ENCODE measurements at regions of chr5 and their contacts with region 1.

Region 1: DNA sequence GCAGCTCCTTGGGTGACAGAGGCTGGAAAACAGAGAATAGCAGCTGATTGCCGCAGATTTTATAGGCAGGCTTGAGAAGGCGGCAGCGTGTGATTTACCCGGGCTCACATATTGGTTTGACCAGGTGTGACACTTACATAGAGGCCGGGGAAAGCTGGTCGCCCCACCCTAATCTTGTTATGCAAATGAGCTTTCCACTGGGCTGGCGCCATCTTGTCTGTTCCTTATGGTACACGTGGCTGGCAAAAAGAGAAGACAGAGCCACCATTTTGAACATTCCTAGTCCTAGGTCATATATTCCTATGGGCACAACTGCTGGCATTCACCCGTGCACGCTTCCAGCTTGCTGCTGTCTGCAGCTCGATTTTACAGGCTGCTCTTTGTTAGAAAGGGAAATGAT is 11.3 kb upstream of the SPZ1 start:
- DNase-seq: no peak
- H3K4me3 ChIP-seq: no peak overlapping the region
- H3K27ac ChIP-seq: no peak overlapping the region
- H3K4me1 ChIP-seq: no peaks in the 10 kb centered on the region
- H3K27me3 ChIP-seq: no peaks in the 10 kb centered on the region
- CTCF ChIP-seq: no peak

Region 2: DNA sequence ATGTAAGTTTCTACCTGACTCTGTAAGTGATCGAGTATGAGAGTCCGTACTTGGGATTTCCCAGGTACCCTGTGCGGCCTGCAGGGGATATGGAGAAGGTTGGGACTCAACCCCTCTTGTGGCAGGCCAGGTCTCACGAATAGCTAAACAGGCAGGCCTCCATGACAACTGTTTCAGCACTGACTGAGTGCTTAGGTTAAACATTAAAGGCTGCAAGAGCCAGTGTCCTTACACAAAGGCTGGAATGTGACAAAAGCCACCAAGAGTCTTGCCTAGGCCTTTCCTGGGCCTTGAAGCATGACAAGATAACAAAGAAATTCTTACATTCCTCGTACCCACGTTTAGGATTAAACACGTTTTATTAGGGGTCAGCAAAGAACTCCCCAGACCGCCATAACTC is 214.7 kb before region 1 on chr5:
- intact Hi-C with region 1: loop called (anchors 1 kb)
- DNase-seq: no peak
- H3K4me3 ChIP-seq: no peak overlapping the region
- H3K27ac ChIP-seq: no peak overlapping the region
- H3K4me1 ChIP-seq: no peaks in the 10 kb centered on the region
- H3K27me3 ChIP-seq: no peaks in the 10 kb centered on the region
- CTCF ChIP-seq: no peak

Region 3: GRCh38 chr5:80370390-80370789 is 61.9 kb after region 1 on chr5:
- intact Hi-C with region 1: no loop called
- DNase-seq: no peak
- H3K4me3 ChIP-seq: no peak overlapping the region
- H3K27ac ChIP-seq: no peak overlapping the region
- H3K4me1 ChIP-seq: no peaks in the 10 kb centered on the region
- H3K27me3 ChIP-seq: no peaks in the 10 kb centered on the region
- CTCF ChIP-seq: no peak

Region 4: DNA sequence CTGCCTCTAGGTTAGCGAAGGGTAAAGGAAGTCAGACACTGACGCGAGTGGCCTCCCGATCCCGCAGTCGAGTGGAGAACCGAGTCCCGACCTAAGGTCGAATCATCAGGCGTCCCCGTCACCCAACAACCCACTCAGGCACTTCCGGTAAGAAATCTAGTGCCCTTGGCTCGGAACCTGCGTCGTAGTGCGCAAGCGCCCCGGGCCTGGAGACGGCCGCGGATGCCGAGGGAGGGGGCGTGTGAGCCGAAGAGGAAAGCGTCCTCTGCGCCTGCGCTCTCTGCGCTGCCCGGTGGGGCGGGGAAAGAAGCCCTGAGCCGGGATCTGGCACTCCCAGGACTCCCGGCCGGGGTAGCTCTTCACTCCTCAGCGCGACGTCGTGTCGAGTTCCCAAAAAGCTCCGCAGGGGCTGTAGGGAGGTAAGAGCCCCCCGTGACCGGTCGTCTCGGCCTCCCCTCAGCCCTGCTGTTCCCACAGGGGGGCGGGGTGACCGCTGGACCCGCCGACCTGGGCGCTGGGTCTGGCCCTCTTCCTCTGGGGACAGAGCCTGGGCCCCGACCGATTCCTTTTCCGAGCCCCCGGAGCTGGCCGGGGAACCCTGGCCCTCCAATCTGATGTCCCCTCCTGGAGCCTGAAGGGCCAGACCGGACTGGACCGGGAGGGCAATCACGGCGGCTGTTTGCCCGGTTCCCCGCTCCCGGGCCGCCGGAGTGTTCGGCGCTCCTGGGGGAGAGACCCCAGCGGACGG is 99.4 kb after region 1 on chr5 and contains the start of gene ZFYVE16:
- intact Hi-C with region 1: no loop called
- DNase-seq: peak; percentile 91 to 99
- H3K4me3 ChIP-seq: peak within 1 kb of the TSS; percentile 71 to 78
- H3K27ac ChIP-seq: peak within 1 kb of the TSS; percentile 89 to 95
- H3K4me1 ChIP-seq: peaks cover 3 to 15% of the 10 kb centered on the region in 2 donors
- H3K27me3 ChIP-seq: no peaks in the 10 kb centered on the region
- CTCF ChIP-seq: peak; percentile 39 to 57 (median 46)
- total RNA-seq, gene ZFYVE16: 10.0 TPM

Measured in ascending aorta (tissue), 2 donors.